CD8-positive, alpha-beta T cell (primary cell): ENCODE measurements at regions of chr5 and their contacts with region 1.

Region 1: DNA sequence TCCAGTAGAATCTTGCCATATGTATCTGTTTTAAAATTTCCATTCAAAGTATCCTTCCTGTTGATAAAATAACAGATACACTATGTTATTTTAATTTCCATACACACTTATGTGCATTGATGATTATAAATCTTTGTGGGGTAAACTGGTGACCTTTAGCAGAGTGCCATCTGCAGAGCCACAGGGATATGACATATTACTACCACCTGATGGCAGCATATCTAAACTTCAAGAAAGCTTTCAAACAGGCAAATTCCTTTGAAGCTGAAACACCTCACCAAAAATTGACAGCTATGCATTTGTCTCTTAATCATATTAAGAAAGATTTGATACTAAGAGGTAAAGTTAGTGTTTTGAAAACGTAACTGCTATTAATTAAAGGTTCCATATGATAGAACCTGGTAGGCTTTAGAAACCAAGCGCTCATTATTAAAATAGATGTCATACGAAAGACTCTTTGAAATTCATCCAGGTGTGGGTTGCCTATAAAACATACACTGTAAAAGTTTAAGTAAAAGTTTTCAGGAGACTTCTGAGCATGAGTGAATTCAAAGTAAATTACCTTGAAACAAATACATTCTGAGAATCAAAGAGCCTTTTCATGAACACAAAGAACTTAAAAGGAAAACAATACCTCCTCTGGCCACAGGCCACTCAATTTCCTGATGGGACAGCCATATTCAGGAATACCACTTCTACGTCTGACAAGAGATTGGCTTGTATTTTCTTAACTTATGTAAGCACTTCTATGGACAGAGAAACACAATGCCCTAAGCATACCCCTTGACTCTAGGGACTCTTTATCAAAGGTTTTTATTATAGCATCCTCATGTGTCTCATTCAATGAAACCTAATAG is 93.3 kb downstream of the KIAA0825 start:
- DNase-seq: peak in 2 of 9 experiments; percentile 61 to 71
- ATAC-seq: peak; percentile 65
- H3K4me3 ChIP-seq: no peak overlapping the region
- H3K4me3 Mint-ChIP-seq: no peak overlapping the region
- H3K27ac ChIP-seq: no peak overlapping the region
- H3K27ac Mint-ChIP-seq: no peak overlapping the region
- H3K4me1 ChIP-seq: no peaks in the 10 kb centered on the region
- H3K4me1 Mint-ChIP-seq: no peaks in the 10 kb centered on the region
- H3K27me3 ChIP-seq: no peaks in the 10 kb centered on the region
- H3K27me3 Mint-ChIP-seq: no peaks in the 10 kb centered on the region
- CTCF ChIP-seq: peak; percentile 62

Region 2: GRCh38 chr5:94693043-94693822 is 168.2 kb after region 1 on chr5:
- CTCF ChIA-PET with region 1: interaction called, 7 read pairs
- POLR2A ChIA-PET with region 1: no interaction called
- intact Hi-C with region 1: loop called (anchors 1 kb)
- DNase-seq: peak in 2 of 9 experiments; percentile 56 to 69
- ATAC-seq: peak; percentile 49
- H3K4me3 ChIP-seq: no peak overlapping the region
- H3K4me3 Mint-ChIP-seq: no peak overlapping the region
- H3K27ac ChIP-seq: peak overlapping the region in 1 of 2 experiments; percentile 29
- H3K27ac Mint-ChIP-seq: no peak overlapping the region
- H3K4me1 ChIP-seq: no peaks in the 10 kb centered on the region
- H3K4me1 Mint-ChIP-seq: no peaks in the 10 kb centered on the region
- H3K27me3 ChIP-seq: no peaks in the 10 kb centered on the region
- H3K27me3 Mint-ChIP-seq: no peaks in the 10 kb centered on the region
- CTCF ChIP-seq: peak; percentile 53

Region 3: GRCh38 chr5:94740286-94740685 is 215.2 kb after region 1 on chr5:
- CTCF ChIA-PET with region 1: interaction called, 30 read pairs
- POLR2A ChIA-PET with region 1: no interaction called
- intact Hi-C with region 1: loop called (anchors 1 kb)
- DNase-seq: no peak
- ATAC-seq: no peak
- H3K4me3 ChIP-seq: no peak overlapping the region
- H3K4me3 Mint-ChIP-seq: no peak overlapping the region
- H3K27ac ChIP-seq: no peak overlapping the region
- H3K27ac Mint-ChIP-seq: no peak overlapping the region
- H3K4me1 ChIP-seq: no peaks in the 10 kb centered on the region
- H3K4me1 Mint-ChIP-seq: no peaks in the 10 kb centered on the region
- H3K27me3 ChIP-seq: no peaks in the 10 kb centered on the region
- H3K27me3 Mint-ChIP-seq: peaks cover 3% of the 10 kb centered on the region
- CTCF ChIP-seq: no peak

Region 4: GRCh38 chr5:94784536-94785510 is 259.8 kb after region 1 on chr5:
- CTCF ChIA-PET with region 1: no interaction called
- POLR2A ChIA-PET with region 1: no interaction called
- intact Hi-C with region 1: loop called in 1 of 2 experiments (anchors 5 kb)
- DNase-seq: no peak
- ATAC-seq: no peak
- H3K4me3 ChIP-seq: no peak overlapping the region
- H3K4me3 Mint-ChIP-seq: no peak overlapping the region
- H3K27ac ChIP-seq: no peak overlapping the region
- H3K27ac Mint-ChIP-seq: no peak overlapping the region
- H3K4me1 ChIP-seq: no peaks in the 10 kb centered on the region
- H3K4me1 Mint-ChIP-seq: no peaks in the 10 kb centered on the region
- H3K27me3 ChIP-seq: no peaks in the 10 kb centered on the region
- H3K27me3 Mint-ChIP-seq: no peaks in the 10 kb centered on the region
- CTCF ChIP-seq: no peak

Region 5: GRCh38 chr5:94849821-94850736 is 325.0 kb after region 1 on chr5:
- CTCF ChIA-PET with region 1: interaction called, 9 read pairs
- POLR2A ChIA-PET with region 1: interaction called, 4 read pairs
- intact Hi-C with region 1: loop called (anchors 1 kb)
- DNase-seq: peak in 7 of 9 experiments; percentile 3 to 70 (median 25)
- ATAC-seq: peak; percentile 89
- H3K4me3 ChIP-seq: no peak overlapping the region
- H3K4me3 Mint-ChIP-seq: no peak overlapping the region
- H3K27ac ChIP-seq: no peak overlapping the region
- H3K27ac Mint-ChIP-seq: no peak overlapping the region
- H3K4me1 ChIP-seq: no peaks in the 10 kb centered on the region
- H3K4me1 Mint-ChIP-seq: no peaks in the 10 kb centered on the region
- H3K27me3 ChIP-seq: no peaks in the 10 kb centered on the region
- H3K27me3 Mint-ChIP-seq: no peaks in the 10 kb centered on the region
- CTCF ChIP-seq: peak; percentile 78